Activated CD8-positive, alpha-beta memory T cell treated with anti-CD3 and anti-CD28 coated beads, Interleukin-2, amount 10 ng/mL, durations not matched to agents 7 days and 5 days (primary cell): ENCODE measurements at regions of chr14 and their contacts with region 1.

Region 1: DNA sequence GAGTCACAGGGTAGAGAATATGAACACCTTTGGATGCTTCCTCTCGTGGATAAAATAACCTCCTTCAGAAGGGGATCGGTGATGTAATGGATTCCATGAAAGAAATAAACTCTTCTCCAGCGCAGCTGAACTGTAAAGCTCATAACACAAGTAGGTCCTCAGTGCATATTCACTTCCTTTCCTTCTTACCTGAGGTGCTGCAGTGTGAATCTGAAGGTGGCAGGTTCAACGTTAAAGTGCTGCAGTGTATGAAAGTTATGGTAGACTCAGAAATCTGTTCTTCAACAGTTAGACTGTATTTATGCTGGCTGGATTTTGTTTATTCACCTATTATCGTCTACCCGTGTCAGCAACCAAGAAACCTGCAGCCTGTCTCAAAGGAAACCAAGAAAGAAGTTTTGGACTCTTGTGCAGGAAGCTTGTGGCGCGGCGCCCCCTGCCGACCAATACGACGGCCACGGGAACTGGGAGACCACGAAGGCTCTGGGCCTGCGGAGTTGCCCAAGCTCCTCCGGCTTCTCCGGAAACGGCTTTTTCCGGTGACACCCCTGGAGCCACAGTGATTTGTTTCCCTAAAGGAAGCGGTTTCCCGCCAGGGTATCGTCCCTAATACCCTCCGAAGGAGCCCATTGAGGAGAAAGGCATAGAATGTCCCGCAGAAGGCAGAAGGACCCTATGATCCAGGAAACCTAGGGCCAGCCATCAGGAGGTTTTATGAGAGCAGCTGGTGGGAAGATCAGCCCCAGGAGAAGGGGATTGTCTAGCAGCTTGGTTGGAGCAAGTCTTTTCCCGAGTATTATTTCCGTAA is 17.6 kb upstream of the RNASE3 start:
- DNase-seq: peak; percentile 86
- ATAC-seq: peak; percentile 90
- H3K4me3 Mint-ChIP-seq: peak overlapping the region; percentile 8
- H3K27ac Mint-ChIP-seq: no peak overlapping the region
- H3K4me1 Mint-ChIP-seq: peaks cover 16% of the 10 kb centered on the region
- H3K27me3 Mint-ChIP-seq: peaks cover 38% of the 10 kb centered on the region

Region 2: GRCh38 chr14:20697273-20698017 is 176.1 kb before region 1 on chr14:
- CTCF ChIA-PET with region 1: interaction called, 21 read pairs
- DNase-seq: peak; percentile 76
- ATAC-seq: peak; percentile 76
- H3K4me3 Mint-ChIP-seq: no peak overlapping the region
- H3K27ac Mint-ChIP-seq: no peak overlapping the region
- H3K4me1 Mint-ChIP-seq: peaks cover 19% of the 10 kb centered on the region
- H3K27me3 Mint-ChIP-seq: peaks cover 2% of the 10 kb centered on the region